ENCODE measurements at regions of chr5 and their contacts with region 1.

Region 1: GRCh38 chr5:66828548-66829357 is 232.6 kb downstream of the MAST4 start:
- DNase-seq: peak; percentile 75
- H3K4me3 Mint-ChIP-seq: peak overlapping the region; percentile 94
- H3K27ac Mint-ChIP-seq: peak overlapping the region; percentile 96
- H3K4me1 Mint-ChIP-seq: peaks cover 90% of the 10 kb centered on the region
- H3K27me3 Mint-ChIP-seq: no peaks in the 10 kb centered on the region

Region 2: GRCh38 chr5:65624571-65625555 is 1203.9 kb before region 1 on chr5 and contains the starts of genes SHLD3 and TRAPPC13:
- intact Hi-C with region 1: loop called (anchors 10 kb)
- DNase-seq: peak; percentile 81
- H3K4me3 Mint-ChIP-seq: peak within 1 kb of the TSS; percentile 94
- H3K27ac Mint-ChIP-seq: peak within 1 kb of the TSS; percentile 96
- H3K4me1 Mint-ChIP-seq: peaks cover 33% of the 10 kb centered on the region
- H3K27me3 Mint-ChIP-seq: no peaks in the 10 kb centered on the region
- total RNA-seq, gene SHLD3: 6.5 and 7.6 TPM in 2 replicates
- total RNA-seq, gene TRAPPC13: 21.7 and 23.7 TPM in 2 replicates

Region 3: GRCh38 chr5:66171349-66172344 is 657.1 kb before region 1 on chr5:
- intact Hi-C with region 1: loop called (anchors 10 kb)
- DNase-seq: peak; percentile 30
- H3K4me3 Mint-ChIP-seq: no peak overlapping the region
- H3K27ac Mint-ChIP-seq: peak overlapping the region; percentile 40
- H3K4me1 Mint-ChIP-seq: peaks cover 29% of the 10 kb centered on the region
- H3K27me3 Mint-ChIP-seq: no peaks in the 10 kb centered on the region

Region 4: DNA sequence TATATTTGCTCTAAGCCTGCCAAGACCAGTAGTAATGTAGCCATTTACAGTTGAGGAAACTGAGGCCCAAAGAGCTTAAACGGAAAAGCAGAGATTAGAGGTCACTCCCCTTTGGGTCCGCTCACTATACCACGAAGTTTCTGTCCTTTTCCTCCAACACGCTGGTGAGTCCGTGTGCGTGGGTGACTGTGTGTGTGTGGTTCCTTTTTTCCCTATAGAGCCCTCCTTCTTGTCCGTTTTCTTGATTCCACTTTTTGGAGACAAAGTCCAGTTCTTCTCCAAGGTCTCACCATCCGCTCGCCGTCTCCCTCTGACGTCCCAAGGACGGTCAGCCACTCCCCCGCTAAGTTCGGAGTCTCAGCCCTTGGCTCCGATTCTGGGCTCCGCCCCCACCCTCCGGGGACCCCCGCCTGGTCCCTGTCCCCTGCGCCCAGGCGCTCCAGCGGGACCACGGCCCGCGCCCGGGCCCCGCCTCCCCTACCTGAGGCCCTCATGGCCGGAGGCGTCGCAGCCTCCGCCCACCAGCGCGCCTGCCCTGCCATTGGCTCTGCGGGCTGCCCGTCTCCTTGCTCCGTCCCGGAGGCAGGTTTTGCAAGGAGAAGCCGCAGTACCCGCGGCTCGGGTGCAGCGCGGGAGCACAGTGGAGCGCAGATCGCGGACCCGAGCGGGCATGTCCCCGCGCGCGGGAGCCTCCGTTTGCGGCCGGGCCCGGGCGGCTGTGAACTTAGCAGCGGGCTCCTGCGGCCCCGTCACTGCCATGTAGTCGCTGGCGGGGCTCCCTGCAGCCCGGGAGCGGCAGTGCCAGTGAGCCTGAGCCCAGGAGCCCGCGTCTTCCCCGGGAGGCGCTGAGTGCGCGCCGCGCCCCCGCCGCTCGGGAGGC is 232.8 kb before region 1 on chr5 and contains the start of gene MAST4:
- intact Hi-C with region 1: loop called (anchors 5 kb)
- DNase-seq: peak; percentile 80
- H3K4me3 Mint-ChIP-seq: peak within 1 kb of the TSS; percentile 87
- H3K27ac Mint-ChIP-seq: peak within 1 kb of the TSS; percentile 56
- H3K4me1 Mint-ChIP-seq: peaks cover 34% of the 10 kb centered on the region
- H3K27me3 Mint-ChIP-seq: peaks cover 56% of the 10 kb centered on the region
- total RNA-seq, gene MAST4: 18.4 and 19.0 TPM in 2 replicates

Region 5: GRCh38 chr5:66840511-66841013 is 11.8 kb after region 1 on chr5:
- intact Hi-C with region 1: loop called (anchors 1 kb)
- DNase-seq: peak; percentile 53
- H3K4me3 Mint-ChIP-seq: peak overlapping the region; percentile 38
- H3K27ac Mint-ChIP-seq: peak overlapping the region; percentile 81
- H3K4me1 Mint-ChIP-seq: peaks cover 81% of the 10 kb centered on the region
- H3K27me3 Mint-ChIP-seq: no peaks in the 10 kb centered on the region

Measured in activated T-helper 1 cell treated with anti-CD3 and anti-CD28 coated beads, Interleukin-12 subunit alpha, Interleukin-12 subunit beta, Interleukin-2, Interleukin-4 antibody, amounts not matched to agents 30 ng/mL and 10 ng/mL and 1 ng/mL, durations not matched to agents 14 hours and 24 hours and 36 hours (primary cell).